B cell (primary cell): ENCODE measurements at regions of chr4 and their contacts with region 1.

Region 1: DNA sequence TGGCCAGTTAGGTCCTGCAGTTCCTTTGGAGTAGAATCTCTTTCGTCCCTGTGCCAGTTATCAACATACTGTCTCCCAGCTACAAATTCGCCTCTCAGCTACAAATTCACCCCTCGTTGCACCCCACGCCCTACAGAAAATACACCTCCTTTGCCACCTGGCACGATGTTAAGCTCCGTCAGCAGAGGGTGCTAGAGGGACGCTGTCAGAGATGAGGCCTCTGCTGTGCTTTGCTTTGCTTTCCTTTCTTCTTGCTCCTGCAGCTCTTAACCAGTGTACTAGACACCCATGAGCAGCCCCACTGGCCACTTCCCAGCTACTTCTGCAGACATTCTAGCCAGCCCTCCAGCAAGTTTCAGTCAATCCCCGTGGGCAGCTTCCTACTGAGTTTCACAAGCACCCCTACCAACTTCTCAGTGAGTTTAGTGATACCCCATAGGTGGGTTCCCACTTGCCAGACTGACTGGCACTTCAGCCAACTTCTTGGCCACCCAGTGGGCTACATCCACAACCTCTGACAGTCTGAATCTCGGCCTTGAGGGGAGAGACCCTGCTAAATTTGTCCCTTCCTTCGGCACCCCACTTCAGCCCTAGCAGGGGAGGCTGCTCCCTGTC is 21.8 kb downstream of the HAUS3 start:
- DNase-seq: peak; percentile 82
- ATAC-seq: peak; percentile 90
- H3K4me3 ChIP-seq: no peak overlapping the region
- H3K4me3 Mint-ChIP-seq: no peak overlapping the region
- H3K27ac ChIP-seq: no peak overlapping the region
- H3K27ac Mint-ChIP-seq: peak overlapping the region; percentile 26
- H3K4me1 ChIP-seq: peaks cover 0 to 5% of the 10 kb centered on the region in 2 donors
- H3K4me1 Mint-ChIP-seq: peaks cover 4% of the 10 kb centered on the region
- H3K27me3 ChIP-seq: no peaks in the 10 kb centered on the region
- H3K27me3 Mint-ChIP-seq: no peaks in the 10 kb centered on the region
- CTCF ChIP-seq: peak; percentile 88

Region 2: DNA sequence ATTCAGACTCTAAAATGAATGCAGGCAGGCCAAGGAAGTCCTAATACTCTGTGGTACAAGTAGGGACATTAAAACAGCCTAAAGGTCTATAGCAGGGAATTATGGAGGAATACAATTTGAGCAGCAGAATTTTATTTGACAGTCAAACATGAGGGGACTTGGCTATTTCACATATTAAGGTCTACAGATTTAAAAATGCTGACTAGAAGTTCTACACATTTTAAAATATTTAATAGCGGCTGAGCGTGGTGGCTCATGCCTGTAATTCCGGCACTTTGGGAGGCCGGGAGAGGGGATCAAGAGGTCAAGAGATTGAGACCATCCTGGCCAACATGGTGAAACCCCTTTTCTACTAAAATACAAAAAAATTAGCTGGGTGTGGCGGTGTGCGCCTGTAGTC is 11.0 kb after region 1 on chr4:
- CTCF ChIA-PET with region 1: interaction called, 17 read pairs
- POLR2A ChIA-PET with region 1: no interaction called
- intact Hi-C with region 1: no loop called
- DNase-seq: no peak
- ATAC-seq: no peak
- H3K4me3 ChIP-seq: no peak overlapping the region
- H3K4me3 Mint-ChIP-seq: no peak overlapping the region
- H3K27ac ChIP-seq: no peak overlapping the region
- H3K27ac Mint-ChIP-seq: no peak overlapping the region
- H3K4me1 ChIP-seq: no peaks in the 10 kb centered on the region
- H3K4me1 Mint-ChIP-seq: no peaks in the 10 kb centered on the region
- H3K27me3 ChIP-seq: no peaks in the 10 kb centered on the region
- H3K27me3 Mint-ChIP-seq: no peaks in the 10 kb centered on the region
- CTCF ChIP-seq: no peak

Region 3: DNA sequence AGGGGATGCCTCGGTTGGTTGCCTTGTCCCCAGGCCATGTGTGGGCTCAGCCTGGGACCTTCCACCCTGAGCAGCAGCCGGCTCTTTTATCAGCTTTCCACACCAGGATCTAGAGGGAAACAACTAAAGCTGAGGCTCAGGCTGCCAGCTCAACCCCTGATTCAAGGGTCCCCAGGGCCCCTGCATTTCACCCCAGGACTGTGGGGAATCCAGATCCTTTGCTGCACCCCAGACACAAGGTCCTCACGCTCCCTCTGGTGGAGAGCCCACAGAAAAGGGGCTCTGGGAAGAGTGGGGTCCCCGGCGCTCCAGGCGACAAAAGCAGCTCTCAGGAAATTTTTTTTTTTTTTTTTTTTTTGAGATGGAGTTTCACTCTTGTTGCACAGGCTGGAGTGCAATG is 134.0 kb after region 1 on chr4:
- CTCF ChIA-PET with region 1: interaction called, 43 read pairs
- POLR2A ChIA-PET with region 1: no interaction called
- intact Hi-C with region 1: loop called (anchors 1 kb)
- DNase-seq: peak; percentile 32
- ATAC-seq: peak; percentile 37
- H3K4me3 ChIP-seq: no peak overlapping the region
- H3K4me3 Mint-ChIP-seq: no peak overlapping the region
- H3K27ac ChIP-seq: no peak overlapping the region
- H3K27ac Mint-ChIP-seq: peak overlapping the region; percentile 32
- H3K4me1 ChIP-seq: peaks cover 11 to 13% of the 10 kb centered on the region in 2 donors
- H3K4me1 Mint-ChIP-seq: peaks cover 15% of the 10 kb centered on the region
- H3K27me3 ChIP-seq: no peaks in the 10 kb centered on the region
- H3K27me3 Mint-ChIP-seq: no peaks in the 10 kb centered on the region
- CTCF ChIP-seq: peak; percentile 42

Region 4: DNA sequence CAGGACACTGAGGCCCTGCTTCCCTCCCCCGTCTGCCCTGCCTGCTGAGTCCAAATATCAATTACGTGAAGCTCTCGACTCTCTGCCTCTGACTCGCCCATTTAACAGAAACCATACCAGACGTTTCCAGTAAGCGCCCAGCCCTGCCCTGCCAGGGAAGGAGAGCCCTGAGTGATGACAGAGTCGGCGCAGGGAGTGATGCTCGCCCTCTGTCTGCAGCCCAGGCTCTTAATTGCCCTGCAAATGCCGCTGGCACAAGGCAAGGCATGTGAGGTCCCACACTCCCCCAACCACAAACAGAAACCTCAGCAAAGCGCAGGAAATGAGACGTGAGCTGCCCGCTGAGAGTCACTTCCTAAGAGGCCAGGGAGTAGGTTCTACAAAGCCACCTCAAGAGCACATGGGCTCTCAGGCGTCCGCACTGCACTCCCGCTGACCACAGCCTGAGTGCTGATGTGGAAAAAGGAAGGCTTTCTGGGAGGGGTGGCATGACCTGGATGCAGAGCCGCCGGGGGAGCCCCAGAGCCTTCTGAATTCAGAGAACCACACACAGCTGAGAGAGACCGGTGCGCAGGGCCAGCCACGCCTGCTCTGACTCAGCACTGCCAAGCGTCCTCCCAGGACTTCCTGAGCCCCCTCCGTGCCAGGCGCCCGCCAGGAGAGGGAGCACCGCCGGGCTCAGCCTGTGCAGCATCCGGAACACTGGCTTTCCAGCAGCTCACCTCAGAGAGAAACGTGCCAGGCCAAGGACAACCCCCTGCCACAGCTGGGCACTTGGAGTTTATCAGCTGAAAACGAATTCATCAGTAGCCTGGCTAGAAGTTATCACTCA is 193.0 kb after region 1 on chr4:
- CTCF ChIA-PET with region 1: interaction called, 12 read pairs
- POLR2A ChIA-PET with region 1: no interaction called
- intact Hi-C with region 1: loop called (anchors 1 kb)
- DNase-seq: peak; percentile 79
- ATAC-seq: peak; percentile 69
- H3K4me3 ChIP-seq: peak overlapping the region in 4 of 5 experiments; percentile 27 to 54 (median 48)
- H3K4me3 Mint-ChIP-seq: peak overlapping the region; percentile 71
- H3K27ac ChIP-seq: no peak overlapping the region
- H3K27ac Mint-ChIP-seq: peak overlapping the region; percentile 33
- H3K4me1 ChIP-seq: peaks cover 40 to 41% of the 10 kb centered on the region in 2 donors
- H3K4me1 Mint-ChIP-seq: peaks cover 39% of the 10 kb centered on the region
- H3K27me3 ChIP-seq: peaks cover 0 to 58% (median 21%) of the 10 kb centered on the region in 4 experiments
- H3K27me3 Mint-ChIP-seq: peaks cover 17% of the 10 kb centered on the region
- CTCF ChIP-seq: no peak

Region 5: GRCh38 chr4:2418650-2419571 is 198.8 kb after region 1 on chr4 and contains the start of gene CFAP99:
- CTCF ChIA-PET with region 1: interaction called, 9 read pairs
- POLR2A ChIA-PET with region 1: no interaction called
- intact Hi-C with region 1: loop called (anchors 1 kb)
- DNase-seq: peak; percentile 99
- ATAC-seq: peak; percentile 92
- H3K4me3 ChIP-seq: peak within 1 kb of the TSS; percentile 2 to 72 (median 51)
- H3K4me3 Mint-ChIP-seq: peak within 1 kb of the TSS; percentile 89
- H3K27ac ChIP-seq: peak within 1 kb of the TSS; percentile 29 to 76
- H3K27ac Mint-ChIP-seq: peak within 1 kb of the TSS; percentile 89
- H3K4me1 ChIP-seq: peaks cover 34 to 38% of the 10 kb centered on the region in 2 donors
- H3K4me1 Mint-ChIP-seq: peaks cover 44% of the 10 kb centered on the region
- H3K27me3 ChIP-seq: peaks cover 0 to 64% (median 33%) of the 10 kb centered on the region in 4 experiments
- H3K27me3 Mint-ChIP-seq: peaks cover 40% of the 10 kb centered on the region
- CTCF ChIP-seq: peak; percentile 41
- total RNA-seq, gene CFAP99: not detected in 2 replicates

Region 6: GRCh38 chr4:2441393-2442174 is 221.5 kb after region 1 on chr4:
- CTCF ChIA-PET with region 1: interaction called, 36 read pairs
- POLR2A ChIA-PET with region 1: no interaction called
- intact Hi-C with region 1: no loop called
- DNase-seq: peak; percentile 78
- ATAC-seq: peak; percentile 98
- H3K4me3 ChIP-seq: no peak overlapping the region
- H3K4me3 Mint-ChIP-seq: no peak overlapping the region
- H3K27ac ChIP-seq: no peak overlapping the region
- H3K27ac Mint-ChIP-seq: no peak overlapping the region
- H3K4me1 ChIP-seq: peaks cover 0 to 7% of the 10 kb centered on the region in 2 donors
- H3K4me1 Mint-ChIP-seq: peaks cover 5% of the 10 kb centered on the region
- H3K27me3 ChIP-seq: no peaks in the 10 kb centered on the region
- H3K27me3 Mint-ChIP-seq: no peaks in the 10 kb centered on the region
- CTCF ChIP-seq: peak; percentile 87

Region 7: DNA sequence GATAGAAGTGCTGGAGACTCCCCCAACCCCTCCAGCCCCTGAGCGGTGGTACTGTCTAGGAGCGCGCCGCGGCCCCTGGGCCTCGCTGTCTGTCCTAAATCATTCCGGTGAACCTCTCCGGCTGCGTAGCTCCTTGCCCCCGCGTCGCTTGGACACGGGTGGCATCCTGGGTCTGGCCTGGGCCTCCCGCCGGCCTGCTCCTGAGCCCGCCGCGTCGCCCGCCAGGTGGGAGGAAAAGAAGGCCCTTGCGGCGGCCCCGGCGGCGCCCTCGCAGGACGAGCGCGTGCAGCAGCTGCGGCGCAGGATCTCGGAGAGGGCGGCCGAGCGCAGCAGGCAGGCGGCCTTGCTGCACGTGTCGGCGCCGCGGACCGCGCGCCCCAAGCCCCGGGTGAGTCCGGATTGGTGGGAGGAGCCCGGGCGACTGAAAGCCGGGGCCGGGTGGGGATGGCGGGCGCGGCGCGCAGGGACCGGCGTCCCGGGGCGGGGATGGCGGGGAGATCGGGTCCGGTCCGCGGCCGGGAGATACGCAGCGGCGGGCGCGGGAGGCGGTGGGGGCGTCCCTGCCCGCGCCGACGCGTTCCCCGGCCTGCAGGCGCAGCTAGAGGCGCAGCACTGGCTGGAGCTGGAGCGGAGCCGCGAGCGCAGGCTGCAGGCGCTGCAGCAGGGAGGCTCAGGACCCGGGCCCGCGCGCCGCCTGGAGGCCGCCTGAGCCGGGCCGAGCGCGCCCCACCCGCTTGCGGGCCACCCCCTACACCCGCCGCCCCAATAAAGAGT is 242.3 kb after region 1 on chr4:
- CTCF ChIA-PET with region 1: interaction called, 54 read pairs
- POLR2A ChIA-PET with region 1: no interaction called
- intact Hi-C with region 1: no loop called
- DNase-seq: peak; percentile 83
- ATAC-seq: peak; percentile 97
- H3K4me3 ChIP-seq: peak overlapping the region in 3 of 5 experiments; percentile 38 to 47 (median 46)
- H3K4me3 Mint-ChIP-seq: peak overlapping the region; percentile 82
- H3K27ac ChIP-seq: no peak overlapping the region
- H3K27ac Mint-ChIP-seq: no peak overlapping the region
- H3K4me1 ChIP-seq: peaks cover 5 to 10% of the 10 kb centered on the region in 2 donors
- H3K4me1 Mint-ChIP-seq: peaks cover 9% of the 10 kb centered on the region
- H3K27me3 ChIP-seq: peaks cover 0 to 9% (median 4%) of the 10 kb centered on the region in 4 experiments
- H3K27me3 Mint-ChIP-seq: peaks cover 3% of the 10 kb centered on the region
- CTCF ChIP-seq: peak; percentile 71